ENCODE measurements at regions of chr3 and their contacts with region 1.

Region 1: DNA sequence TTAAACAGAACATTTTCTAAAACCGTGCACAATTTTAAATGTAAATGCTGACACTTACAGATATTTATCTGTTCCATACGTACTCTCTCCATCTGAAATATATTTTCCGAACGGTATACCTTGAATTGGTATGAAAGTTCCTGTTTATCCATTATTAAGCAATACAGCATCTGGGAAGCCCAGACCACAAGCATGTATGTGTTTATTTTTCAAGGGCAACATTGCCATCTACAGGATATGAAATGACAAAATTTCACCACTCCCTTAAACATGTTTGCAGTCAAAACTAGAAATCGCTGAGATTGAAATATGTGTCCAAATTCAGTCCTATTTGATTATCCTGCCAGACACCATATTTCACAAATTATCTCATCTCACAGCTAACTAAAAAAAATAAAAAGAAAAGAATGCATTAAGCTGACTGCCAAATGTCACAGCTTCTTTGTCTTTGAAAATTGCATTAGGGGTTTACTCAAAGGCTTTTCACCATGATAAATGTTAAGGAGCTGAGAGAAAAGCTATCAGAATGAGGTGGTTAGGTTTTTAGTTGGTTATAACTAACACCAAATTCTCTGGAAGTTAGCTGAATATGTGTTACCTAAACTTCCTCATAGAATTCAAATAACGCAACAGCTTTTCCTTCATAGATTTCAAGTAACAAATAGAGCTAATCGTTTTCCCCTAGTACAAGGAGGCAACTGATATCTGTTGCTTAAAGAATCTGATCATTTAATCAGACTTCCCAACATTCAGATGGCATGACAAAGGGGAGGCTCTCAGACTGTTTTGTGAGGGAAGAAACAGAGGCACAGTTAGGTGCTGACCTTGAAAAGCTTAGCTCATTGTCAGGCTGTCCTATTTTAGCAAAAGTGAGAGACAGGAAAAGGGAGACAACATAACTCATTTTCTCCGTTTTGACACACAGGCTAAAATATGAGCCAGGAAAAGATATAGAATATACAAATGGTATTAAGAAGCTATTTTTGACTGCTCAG is 533.1 kb downstream of the TBL1XR1 start:
- DNase-seq: peak; percentile 28
- H3K4me3 ChIP-seq: no peak overlapping the region
- CTCF ChIP-seq: peak; percentile 14

Region 2: DNA sequence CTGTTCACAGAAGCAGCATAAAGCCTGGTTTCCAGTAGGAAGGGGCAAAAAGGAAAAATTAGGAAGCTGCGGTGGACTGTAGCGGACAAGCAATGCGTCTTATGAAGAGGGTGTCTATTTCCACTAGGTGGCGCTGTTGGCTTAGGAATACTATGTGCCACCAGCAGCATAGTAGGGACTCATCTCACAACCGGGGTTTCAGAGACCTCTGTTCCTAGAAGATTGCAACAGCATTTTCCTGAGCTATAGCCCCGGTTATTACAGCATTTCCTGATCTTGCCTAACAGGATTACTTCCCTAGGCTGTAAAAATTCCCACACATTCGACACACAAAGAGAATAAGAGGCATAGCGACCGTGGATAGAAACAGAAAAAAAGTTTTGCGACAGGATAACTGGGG is 149.8 kb before region 1 on chr3:
- CTCF ChIA-PET with region 1: interaction called, 33 read pairs
- POLR2A ChIA-PET with region 1: no interaction called
- DNase-seq: no peak
- H3K4me3 ChIP-seq: no peak overlapping the region
- CTCF ChIP-seq: peak; percentile 23

Region 3: DNA sequence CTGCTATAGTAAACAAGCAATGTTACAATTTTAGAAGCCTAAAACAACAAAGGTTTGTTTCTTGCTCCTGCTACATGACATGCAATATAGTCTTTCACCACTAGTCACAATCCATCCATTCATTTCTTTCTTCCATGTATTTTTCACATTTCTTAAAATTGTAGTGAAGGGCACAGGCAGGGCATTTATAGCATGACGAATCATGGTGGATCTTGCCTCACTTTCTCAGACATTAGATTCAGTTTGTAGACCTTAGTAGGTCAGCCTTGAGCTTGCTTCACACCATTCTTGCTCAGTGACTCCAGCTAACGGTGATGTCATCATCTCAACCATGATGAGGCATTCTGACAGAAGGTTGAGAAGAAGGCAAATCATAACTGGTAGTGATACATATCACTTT is 13.7 kb before region 1 on chr3:
- CTCF ChIA-PET with region 1: interaction called, 11 read pairs
- POLR2A ChIA-PET with region 1: no interaction called
- DNase-seq: no peak
- H3K4me3 ChIP-seq: no peak overlapping the region
- CTCF ChIP-seq: no peak

Region 4: DNA sequence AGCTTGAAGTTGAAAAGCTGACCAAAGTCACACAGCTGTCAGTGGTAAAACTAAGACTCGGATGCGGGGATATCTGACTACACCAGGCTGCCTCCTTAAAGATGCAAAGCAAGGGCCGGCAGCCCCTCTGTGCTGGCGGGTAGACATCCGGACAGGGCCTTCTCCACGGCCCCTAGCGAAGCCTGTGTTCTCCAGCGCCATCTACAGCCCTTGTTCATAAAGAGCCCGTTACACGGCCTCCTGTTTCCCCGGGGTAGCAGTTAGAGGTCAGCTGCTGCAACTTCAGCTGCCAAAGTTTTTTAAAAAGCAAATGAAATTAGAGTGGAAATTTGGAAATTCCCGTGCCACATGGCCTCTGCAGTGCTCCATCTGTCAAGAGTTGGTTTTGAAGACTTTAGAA is 150.2 kb after region 1 on chr3:
- CTCF ChIA-PET with region 1: interaction called, 10 read pairs
- POLR2A ChIA-PET with region 1: no interaction called
- DNase-seq: no peak
- H3K4me3 ChIP-seq: no peak overlapping the region
- CTCF ChIP-seq: peak; percentile 63